ENCODE measurements at regions of chr12 and their contacts with region 1.

Region 1: DNA sequence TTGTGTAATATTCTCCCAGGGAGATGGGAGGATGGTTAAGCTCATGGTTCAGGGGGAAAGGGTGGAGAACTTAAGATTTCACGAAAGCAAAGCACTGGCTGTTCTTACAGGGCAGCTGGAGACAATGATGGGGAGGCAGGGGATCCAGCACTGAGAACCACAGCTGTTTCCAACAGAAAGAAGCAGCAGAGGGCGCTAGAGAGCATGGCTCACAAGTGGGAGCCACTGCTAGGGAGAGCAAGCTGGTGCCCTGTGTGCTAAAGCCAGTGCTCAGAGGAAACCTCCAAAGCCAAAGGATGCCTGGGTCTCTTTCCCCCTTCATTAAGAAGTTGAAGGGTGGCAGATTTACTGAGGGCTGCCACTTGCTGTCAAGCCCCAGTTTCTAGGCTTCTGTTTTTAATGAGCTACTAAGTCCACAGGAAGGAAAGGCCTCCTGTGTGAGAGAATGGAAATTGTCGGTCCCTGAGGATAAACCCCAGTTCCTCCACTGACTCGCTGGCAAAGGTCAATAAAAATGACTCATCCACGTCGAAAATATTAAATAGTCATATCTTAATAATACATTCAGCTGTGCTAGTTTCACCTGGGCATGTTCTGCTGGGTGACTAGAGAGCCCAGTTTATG is 199.7 kb downstream of the ANO2 start:
- DNase-seq: no peak
- H3K4me3 ChIP-seq: no peak overlapping the region
- H3K27me3 ChIP-seq: 0 out of 2 replicates have a peak, but pooled peaks cover 2% of the 10 kb centered on the region
- CTCF ChIP-seq: peak; percentile 88

Region 2: DNA sequence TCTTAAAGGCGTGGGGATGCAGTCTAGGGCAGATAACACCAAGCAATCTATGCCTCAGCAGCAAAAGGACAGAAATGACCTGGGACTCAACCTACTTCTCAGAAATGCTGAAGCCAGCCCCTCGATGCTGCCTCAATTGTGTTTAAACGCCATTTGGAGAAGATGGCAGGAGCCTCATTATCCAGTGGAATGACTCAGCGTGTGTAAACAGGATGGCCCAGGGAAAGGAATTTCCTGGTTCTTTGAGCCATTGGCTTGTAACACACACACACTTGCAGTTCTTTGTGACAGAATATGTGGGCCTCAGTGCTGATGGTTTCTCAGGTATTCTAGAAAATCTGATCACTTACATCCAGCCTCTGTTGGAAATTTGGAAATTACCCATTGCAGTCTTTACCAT is 159.2 kb before region 1 on chr12:
- CTCF ChIA-PET with region 1: no interaction called
- POLR2A ChIA-PET with region 1: no interaction called
- DNase-seq: no peak
- H3K4me3 ChIP-seq: no peak overlapping the region
- H3K27me3 ChIP-seq: no peaks in the 10 kb centered on the region
- CTCF ChIP-seq: no peak

Region 3: GRCh38 chr12:5756338-5756842 is 11.0 kb after region 1 on chr12:
- CTCF ChIA-PET with region 1: interaction called, 22 read pairs
- POLR2A ChIA-PET with region 1: no interaction called
- DNase-seq: no peak
- H3K4me3 ChIP-seq: no peak overlapping the region
- H3K27me3 ChIP-seq: no peaks in the 10 kb centered on the region
- CTCF ChIP-seq: no peak

Region 4: GRCh38 chr12:5796171-5796958 is 51.0 kb after region 1 on chr12:
- CTCF ChIA-PET with region 1: interaction called, 14 read pairs
- POLR2A ChIA-PET with region 1: no interaction called
- DNase-seq: no peak
- H3K4me3 ChIP-seq: no peak overlapping the region
- H3K27me3 ChIP-seq: no peaks in the 10 kb centered on the region; the same call in none of the 2 replicates
- CTCF ChIP-seq: peak; percentile 54

Region 5: DNA sequence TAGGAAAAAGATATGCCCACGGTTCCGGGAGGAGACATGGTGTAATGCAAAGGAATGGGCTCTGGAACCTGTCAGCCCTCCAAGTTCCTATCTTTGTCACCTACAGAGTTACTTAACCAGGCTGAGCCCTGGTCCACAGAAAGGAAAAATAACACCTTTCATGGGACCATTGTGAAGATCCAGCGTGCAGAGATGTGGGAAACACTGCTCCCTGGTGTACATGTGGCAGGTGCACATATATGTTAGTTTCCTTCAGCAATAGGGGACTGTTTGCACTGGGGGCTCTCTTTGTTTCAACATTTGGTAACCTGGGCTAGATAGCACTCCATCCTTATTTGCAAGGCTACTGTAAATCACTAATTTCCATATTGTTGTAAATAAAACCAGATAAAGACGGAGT is 127.4 kb after region 1 on chr12:
- CTCF ChIA-PET with region 1: interaction called, 80 read pairs
- POLR2A ChIA-PET with region 1: no interaction called
- DNase-seq: no peak
- H3K4me3 ChIP-seq: no peak overlapping the region
- H3K27me3 ChIP-seq: peaks cover 2% of the 10 kb centered on the region
- CTCF ChIP-seq: peak; percentile 55